Colonic mucosa (tissue), 4 donors: ENCODE measurements at regions of chr15 and their contacts with region 1.

Region 1: GRCh38 chr15:47196057-47196456 is 521.2 kb upstream of the SEMA6D start:
- DNase-seq: peak; percentile 72
- H3K4me3 ChIP-seq: no peak overlapping the region
- H3K27ac ChIP-seq: no peak overlapping the region
- H3K4me1 ChIP-seq: no peaks in the 10 kb centered on the region
- H3K27me3 ChIP-seq: no peaks in the 10 kb centered on the region
- CTCF ChIP-seq: peak; percentile 81

Region 2: DNA sequence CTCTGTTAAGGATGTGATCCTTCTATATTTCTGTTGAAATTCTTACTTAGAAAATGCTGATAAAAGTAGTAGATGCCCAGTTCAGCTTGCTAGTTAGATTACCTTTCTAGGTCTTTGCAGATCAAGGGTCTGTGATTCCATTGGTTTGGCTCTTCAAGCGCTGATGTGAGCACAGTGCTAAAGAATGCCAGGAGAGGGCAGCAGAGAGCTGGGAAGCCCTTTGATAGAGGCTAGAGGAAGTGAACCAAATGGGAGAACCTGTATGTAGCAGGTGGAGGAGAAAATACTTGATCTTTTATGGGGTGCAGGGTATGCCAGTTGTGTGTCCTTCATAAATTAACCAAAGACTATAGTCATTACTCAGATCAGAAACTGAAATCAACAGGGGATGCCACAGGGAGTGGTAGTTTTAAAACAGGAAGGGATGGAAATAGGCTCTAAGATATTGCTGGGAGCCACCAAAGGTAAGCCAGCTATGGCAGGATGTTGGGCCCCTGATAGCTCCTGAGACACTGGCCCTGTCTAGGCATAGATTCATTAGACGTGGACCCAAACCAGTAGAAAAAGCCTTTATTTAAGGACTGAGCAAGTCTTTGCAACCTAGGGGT is 883.8 kb before region 1 on chr15:
- intact Hi-C with region 1: loop called (anchors 10 kb)
- DNase-seq: peak; percentile 80
- H3K4me3 ChIP-seq: no peak overlapping the region
- H3K27ac ChIP-seq: no peak overlapping the region
- H3K4me1 ChIP-seq: no peaks in the 10 kb centered on the region
- H3K27me3 ChIP-seq: no peaks in the 10 kb centered on the region
- CTCF ChIP-seq: peak; percentile 91

Region 3: DNA sequence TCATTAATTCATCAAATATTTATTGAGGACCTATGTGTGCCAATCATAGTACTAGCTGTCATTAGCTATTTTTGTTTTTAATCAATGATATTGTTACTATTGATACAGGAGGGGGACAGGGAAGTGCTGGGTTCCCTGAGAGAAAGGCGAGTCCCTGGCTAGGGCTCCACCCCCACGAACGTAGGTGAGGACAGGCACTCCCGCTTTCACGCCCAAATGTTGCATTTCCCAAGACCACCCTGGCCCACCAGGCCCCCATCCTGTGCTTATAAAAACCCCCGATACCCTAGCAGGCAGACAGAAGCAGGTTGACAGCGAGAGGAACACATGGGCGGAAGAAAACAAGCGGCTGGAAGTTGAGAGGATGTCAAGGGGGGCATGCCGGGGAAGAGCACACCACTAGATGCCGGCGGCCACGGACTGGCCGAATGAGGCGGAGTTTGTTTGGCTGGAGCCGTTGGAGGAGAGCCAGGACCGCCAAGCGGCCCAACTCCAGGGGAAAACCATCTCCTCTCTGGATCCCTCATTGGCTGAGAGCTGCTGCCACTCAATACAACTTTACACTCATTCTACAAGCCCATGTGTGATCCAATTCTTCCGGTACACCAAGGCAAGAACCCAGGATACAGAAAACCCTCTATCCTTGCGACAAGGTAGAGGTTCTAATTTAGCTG is 277.5 kb before region 1 on chr15:
- intact Hi-C with region 1: no loop called
- DNase-seq: no peak
- H3K4me3 ChIP-seq: no peak overlapping the region
- H3K27ac ChIP-seq: no peak overlapping the region
- H3K4me1 ChIP-seq: no peaks in the 10 kb centered on the region
- H3K27me3 ChIP-seq: no peaks in the 10 kb centered on the region
- CTCF ChIP-seq: no peak

Region 4: DNA sequence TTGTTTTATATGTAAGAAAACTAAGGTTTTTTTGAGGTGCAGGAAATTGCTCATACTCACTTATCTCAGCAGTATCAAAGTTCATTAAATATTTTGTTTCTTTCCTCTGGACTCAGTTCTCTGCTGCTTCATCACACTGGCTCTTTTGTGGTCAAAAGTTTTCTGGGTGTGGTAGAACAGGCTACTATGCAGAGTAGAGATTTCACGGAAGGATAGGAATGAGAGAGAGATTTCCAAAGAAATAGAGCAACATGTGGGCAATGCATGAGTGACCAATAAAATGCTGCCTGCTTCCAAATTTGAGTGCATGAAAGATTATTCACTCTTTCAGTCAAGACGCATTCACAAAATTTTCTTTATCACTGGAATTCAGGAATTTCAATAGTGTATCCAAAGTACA is 56.1 kb before region 1 on chr15:
- intact Hi-C with region 1: no loop called
- DNase-seq: no peak
- H3K4me3 ChIP-seq: no peak overlapping the region
- H3K27ac ChIP-seq: no peak overlapping the region
- H3K4me1 ChIP-seq: no peaks in the 10 kb centered on the region
- H3K27me3 ChIP-seq: no peaks in the 10 kb centered on the region
- CTCF ChIP-seq: no peak

Region 5: GRCh38 chr15:47987908-47988532 is 792.0 kb after region 1 on chr15:
- intact Hi-C with region 1: loop called (anchors 2 kb)
- DNase-seq: peak; percentile 30
- H3K4me3 ChIP-seq: no peak overlapping the region
- H3K27ac ChIP-seq: no peak overlapping the region
- H3K4me1 ChIP-seq: no peaks in the 10 kb centered on the region
- H3K27me3 ChIP-seq: no peaks in the 10 kb centered on the region
- CTCF ChIP-seq: peak; percentile 53

Region 6: DNA sequence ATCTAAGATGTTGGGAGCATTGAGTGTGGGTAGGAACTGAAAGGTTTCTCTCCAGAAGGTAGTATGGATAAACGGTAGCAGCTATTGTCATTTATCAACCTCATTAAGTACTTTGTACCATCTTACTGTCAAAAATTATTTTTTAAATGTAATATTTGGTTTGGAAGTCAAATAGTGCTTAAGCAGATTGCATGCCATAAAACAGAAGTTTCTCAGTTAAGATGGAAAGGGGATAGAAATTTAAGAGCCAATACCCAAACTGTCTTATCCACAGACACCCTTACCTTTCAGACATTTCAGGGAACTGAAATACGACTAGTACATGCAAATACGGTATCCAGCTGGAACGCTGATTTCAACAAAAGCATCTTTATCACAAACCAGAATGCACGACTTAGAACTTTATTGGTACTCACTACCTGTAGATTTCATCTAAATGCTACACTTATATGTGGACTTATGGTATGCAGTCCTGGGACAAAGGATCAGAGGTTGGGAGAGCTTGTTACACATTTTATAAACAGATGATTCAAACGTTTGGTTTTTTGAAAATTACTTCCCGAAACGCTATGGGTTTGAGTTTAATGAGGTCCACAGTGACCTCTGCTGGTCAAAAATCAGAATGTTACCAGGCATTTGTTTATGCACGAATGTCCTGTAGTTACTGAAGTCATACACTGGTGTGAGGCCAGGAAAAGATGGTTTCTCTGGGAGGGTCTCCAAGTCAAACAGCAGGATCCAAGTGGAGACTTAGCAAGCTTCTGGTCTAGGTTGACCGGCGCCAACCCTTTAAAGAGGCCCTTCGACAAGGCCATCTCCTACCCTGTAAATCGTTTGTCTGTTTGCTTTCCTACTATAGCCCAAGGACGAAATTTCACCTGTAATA is 1089.5 kb after region 1 on chr15:
- intact Hi-C with region 1: loop called (anchors 5 kb)
- DNase-seq: peak; percentile 79
- H3K4me3 ChIP-seq: no peak overlapping the region
- H3K27ac ChIP-seq: no peak overlapping the region
- H3K4me1 ChIP-seq: no peaks in the 10 kb centered on the region
- H3K27me3 ChIP-seq: no peaks in the 10 kb centered on the region
- CTCF ChIP-seq: peak; percentile 70

Region 7: GRCh38 chr15:48352474-48353072 is 1156.5 kb after region 1 on chr15:
- intact Hi-C with region 1: loop called (anchors 10 kb)
- DNase-seq: peak; percentile 56
- H3K4me3 ChIP-seq: no peak overlapping the region
- H3K27ac ChIP-seq: no peak overlapping the region
- H3K4me1 ChIP-seq: no peaks in the 10 kb centered on the region
- H3K27me3 ChIP-seq: no peaks in the 10 kb centered on the region
- CTCF ChIP-seq: peak; percentile 63